ENCODE measurements at regions of chr1 and their contacts with region 1.

Region 1: GRCh38 chr1:67685067-67685557 is at the start of gene GADD45A:
- DNase-seq: peak; percentile 99
- H3K4me3 ChIP-seq: peak within 1 kb of the TSS; percentile 68 to 87 (median 76)
- H3K27ac ChIP-seq: peak within 1 kb of the TSS; percentile 90 to 98 (median 94)
- H3K4me1 ChIP-seq: peaks cover 0 to 36% (median 15%) of the 10 kb centered on the region in 4 donors
- H3K27me3 ChIP-seq: no peaks in the 10 kb centered on the region
- CTCF ChIP-seq: no peak
- EP300 ChIP-seq: no peak
- POLR2A ChIP-seq: peak; percentile 87 to 96
- total RNA-seq, gene GADD45A: 16.9 to 23.6 (median 19.7) TPM

Region 2: DNA sequence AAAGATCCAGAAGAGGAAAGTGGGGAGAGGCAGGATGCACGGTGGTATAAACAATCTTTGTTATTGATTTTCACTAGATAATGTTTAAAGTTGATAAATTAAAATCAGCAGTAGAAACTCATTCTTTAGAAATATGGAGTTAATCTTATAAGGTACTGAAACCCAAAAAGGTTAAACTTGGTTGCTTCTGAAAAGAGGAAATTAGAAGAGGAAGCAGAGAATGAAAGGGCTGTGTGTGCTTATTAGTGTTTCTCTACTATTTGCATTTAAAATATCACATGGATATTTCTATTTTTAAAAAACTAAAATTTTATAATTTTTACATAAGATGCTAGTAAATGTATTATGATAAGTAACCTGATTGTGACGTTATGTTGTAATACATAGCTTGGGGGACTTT is 574.8 kb before region 1 on chr1:
- intact Hi-C with region 1: no loop called
- DNase-seq: no peak
- H3K4me3 ChIP-seq: no peak overlapping the region
- H3K27ac ChIP-seq: no peak overlapping the region
- H3K4me1 ChIP-seq: no peaks in the 10 kb centered on the region
- H3K27me3 ChIP-seq: no peaks in the 10 kb centered on the region
- CTCF ChIP-seq: no peak
- EP300 ChIP-seq: no peak
- POLR2A ChIP-seq: no peak

Region 3: DNA sequence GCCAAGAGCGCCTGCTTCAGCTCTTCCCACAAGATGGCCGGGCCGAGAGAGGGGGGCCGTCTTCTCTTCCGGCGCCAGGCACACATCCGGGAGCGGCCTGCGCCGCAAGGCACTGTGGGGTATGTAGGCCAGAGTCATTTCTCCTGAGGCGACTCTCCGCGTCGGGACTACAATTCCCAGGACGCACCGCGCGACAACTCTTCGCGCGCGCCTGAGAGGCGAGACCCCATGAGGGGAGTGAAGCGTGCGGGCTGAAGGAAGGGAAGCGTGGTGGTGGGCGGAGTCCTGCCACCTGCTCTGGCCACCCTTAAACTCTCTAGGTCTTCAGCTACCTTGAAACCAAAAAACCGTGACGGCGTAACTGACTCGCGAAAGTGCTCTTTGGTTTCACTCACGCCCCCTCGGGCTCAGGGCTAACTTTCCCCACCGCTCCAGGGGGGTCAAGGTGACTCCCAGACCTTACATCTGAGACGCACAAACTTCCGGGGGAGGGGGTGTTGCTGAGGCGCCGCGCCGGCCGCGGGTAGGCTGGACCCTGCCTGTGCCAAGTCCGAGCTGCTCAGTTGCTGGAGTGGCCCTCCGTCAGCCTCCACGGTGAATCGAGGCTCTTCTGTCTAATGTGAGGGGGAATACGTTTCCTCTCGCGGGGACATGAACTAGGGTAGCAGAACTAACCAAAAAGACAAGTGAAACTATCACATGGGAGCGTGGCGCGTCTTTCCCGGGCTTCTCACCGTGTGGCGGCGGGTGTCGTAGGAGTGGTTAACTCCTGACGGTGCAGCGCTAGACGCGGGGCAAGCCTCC is 254.6 kb before region 1 on chr1 and contains the start of gene SERBP1:
- intact Hi-C with region 1: loop called (anchors 5 kb)
- DNase-seq: peak; percentile 97
- H3K4me3 ChIP-seq: peak within 1 kb of the TSS; percentile 62 to 83 (median 78)
- H3K27ac ChIP-seq: peak within 1 kb of the TSS; percentile 92 to 96 (median 94)
- H3K4me1 ChIP-seq: peaks cover 0 to 61% (median 37%) of the 10 kb centered on the region in 4 donors
- H3K27me3 ChIP-seq: no peaks in the 10 kb centered on the region
- CTCF ChIP-seq: no peak
- EP300 ChIP-seq: no peak
- POLR2A ChIP-seq: peak in 1 of 2 donors; percentile 52
- total RNA-seq, gene SERBP1: 201 to 236 (median 225) TPM

Region 4: GRCh38 chr1:67561704-67562113 is 123.4 kb before region 1 on chr1:
- intact Hi-C with region 1: loop called (anchors 2 kb)
- DNase-seq: peak; percentile 92
- H3K4me3 ChIP-seq: no peak overlapping the region
- H3K27ac ChIP-seq: peak overlapping the region in 2 of 4 donors; percentile 5 to 11
- H3K4me1 ChIP-seq: peaks cover 0 to 16% (median 9%) of the 10 kb centered on the region in 4 donors
- H3K27me3 ChIP-seq: no peaks in the 10 kb centered on the region
- CTCF ChIP-seq: peak; percentile 44 to 80 (median 76)
- EP300 ChIP-seq: no peak
- POLR2A ChIP-seq: no peak

Region 5: DNA sequence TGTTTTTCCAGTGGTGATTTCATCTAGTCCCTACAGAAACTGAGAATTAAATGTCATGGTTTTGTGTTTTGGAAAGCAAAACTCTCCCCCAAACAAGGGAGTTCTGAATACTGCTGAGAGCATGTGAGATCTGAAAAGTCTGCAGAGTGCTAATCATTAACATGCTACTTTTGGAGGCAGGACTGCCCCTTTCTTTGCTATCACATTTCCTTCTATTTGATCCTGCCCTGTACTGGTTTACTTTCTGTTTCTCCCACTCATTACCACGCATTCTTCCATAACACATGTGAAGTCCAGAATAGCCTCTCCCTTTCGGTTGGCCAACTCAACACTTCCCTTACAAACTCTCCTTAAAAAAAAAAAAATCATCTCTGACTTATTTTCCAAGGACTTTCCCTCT is 63.5 kb after region 1 on chr1:
- intact Hi-C with region 1: loop called (anchors 5 kb)
- DNase-seq: no peak
- H3K4me3 ChIP-seq: peak overlapping the region in 2 of 4 donors; percentile 1 to 2
- H3K27ac ChIP-seq: peak overlapping the region; percentile 67 to 87 (median 82)
- H3K4me1 ChIP-seq: peaks cover 0 to 62% (median 40%) of the 10 kb centered on the region in 4 donors
- H3K27me3 ChIP-seq: no peaks in the 10 kb centered on the region
- CTCF ChIP-seq: no peak
- EP300 ChIP-seq: no peak
- POLR2A ChIP-seq: no peak

Region 6: GRCh38 chr1:68120136-68120791 is 435.2 kb after region 1 on chr1:
- intact Hi-C with region 1: loop called (anchors 10 kb)
- DNase-seq: no peak
- H3K4me3 ChIP-seq: no peak overlapping the region
- H3K27ac ChIP-seq: peak overlapping the region; percentile 67 to 75 (median 73)
- H3K4me1 ChIP-seq: peaks cover 0 to 26% (median 15%) of the 10 kb centered on the region in 4 donors
- H3K27me3 ChIP-seq: no peaks in the 10 kb centered on the region
- CTCF ChIP-seq: peak; percentile 48 to 87 (median 84)
- EP300 ChIP-seq: no peak
- POLR2A ChIP-seq: no peak

Measured in sigmoid colon (tissue), 7 donors.